Endothelial cell of umbilical vein (primary cell): ENCODE measurements at regions of chr2 and their contacts with region 1.

Region 1: GRCh38 chr2:106701203-106702022 is 184.6 kb downstream of the ST6GAL2 start:
- DNase-seq: no peak
- H3K4me3 ChIP-seq: no peak overlapping the region
- H3K27ac ChIP-seq: no peak overlapping the region
- H3K4me1 ChIP-seq: no peaks in the 10 kb centered on the region
- H3K27me3 ChIP-seq: no peaks in the 10 kb centered on the region
- CTCF ChIP-seq: no peak
- POLR2A ChIP-seq: no peak

Region 2: DNA sequence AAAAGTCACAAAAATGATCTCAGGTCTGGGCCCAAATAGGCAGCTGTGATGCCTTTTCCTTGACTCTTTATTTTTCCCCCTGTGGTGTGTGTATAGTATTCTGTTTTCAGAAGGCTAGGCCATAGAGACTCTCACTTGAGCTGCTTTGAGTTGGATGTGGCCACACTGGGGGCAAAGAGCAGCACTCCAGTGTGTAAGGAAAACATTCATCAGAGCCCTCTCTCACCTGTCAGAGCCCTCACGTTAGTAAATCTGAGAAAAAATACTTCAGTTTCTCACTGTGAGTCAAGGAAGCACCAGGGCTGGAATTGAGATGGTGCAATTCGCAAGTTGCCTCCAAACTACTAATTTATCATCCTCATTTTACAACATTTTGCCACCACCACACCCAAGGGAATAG is 48.4 kb after region 1 on chr2:
- CTCF ChIA-PET with region 1: no interaction called
- POLR2A ChIA-PET with region 1: no interaction called
- dilution Hi-C with region 1: no loop called
- intact Hi-C with region 1: loop called (anchors 5 kb)
- DNase-seq: no peak
- H3K4me3 ChIP-seq: no peak overlapping the region
- H3K27ac ChIP-seq: no peak overlapping the region
- H3K4me1 ChIP-seq: no peaks in the 10 kb centered on the region
- H3K27me3 ChIP-seq: no peaks in the 10 kb centered on the region
- CTCF ChIP-seq: no peak
- POLR2A ChIP-seq: no peak

Region 3: DNA sequence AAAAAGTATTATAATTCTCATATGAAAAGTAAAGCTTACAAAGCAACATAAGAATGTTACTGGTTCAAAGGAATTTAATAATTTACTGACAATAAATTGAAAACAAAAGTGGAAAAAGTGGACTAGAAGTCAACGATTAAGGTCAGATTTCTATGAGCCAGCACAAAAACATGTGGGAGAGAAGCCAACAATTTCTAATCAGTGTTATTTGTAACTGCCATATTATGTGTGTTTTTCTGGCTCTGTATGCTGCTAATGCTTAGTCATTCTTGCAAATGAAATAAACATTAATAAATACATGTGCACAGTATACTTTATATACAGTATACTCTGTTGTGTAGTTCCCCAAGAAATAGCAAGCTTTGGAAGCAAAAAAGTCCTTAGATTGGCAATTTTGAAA is 824.0 kb after region 1 on chr2:
- CTCF ChIA-PET with region 1: no interaction called
- POLR2A ChIA-PET with region 1: no interaction called
- dilution Hi-C with region 1: no loop called
- intact Hi-C with region 1: no loop called
- DNase-seq: no peak
- H3K4me3 ChIP-seq: no peak overlapping the region
- H3K27ac ChIP-seq: no peak overlapping the region
- H3K4me1 ChIP-seq: no peaks in the 10 kb centered on the region
- H3K27me3 ChIP-seq: no peaks in the 10 kb centered on the region
- CTCF ChIP-seq: no peak
- POLR2A ChIP-seq: no peak